ENCODE measurements at regions of chr1 and their contacts with region 1.

Region 1: GRCh38 chr1:67468066-67468718 is 38.0 kb upstream of the SERBP1 start:
- DNase-seq: peak; percentile 41
- H3K4me3 ChIP-seq: no peak overlapping the region
- H3K27ac ChIP-seq: no peak overlapping the region
- H3K4me1 ChIP-seq: peaks cover 7% of the 10 kb centered on the region
- H3K27me3 ChIP-seq: no peaks in the 10 kb centered on the region
- CTCF ChIP-seq: no peak

Region 2: DNA sequence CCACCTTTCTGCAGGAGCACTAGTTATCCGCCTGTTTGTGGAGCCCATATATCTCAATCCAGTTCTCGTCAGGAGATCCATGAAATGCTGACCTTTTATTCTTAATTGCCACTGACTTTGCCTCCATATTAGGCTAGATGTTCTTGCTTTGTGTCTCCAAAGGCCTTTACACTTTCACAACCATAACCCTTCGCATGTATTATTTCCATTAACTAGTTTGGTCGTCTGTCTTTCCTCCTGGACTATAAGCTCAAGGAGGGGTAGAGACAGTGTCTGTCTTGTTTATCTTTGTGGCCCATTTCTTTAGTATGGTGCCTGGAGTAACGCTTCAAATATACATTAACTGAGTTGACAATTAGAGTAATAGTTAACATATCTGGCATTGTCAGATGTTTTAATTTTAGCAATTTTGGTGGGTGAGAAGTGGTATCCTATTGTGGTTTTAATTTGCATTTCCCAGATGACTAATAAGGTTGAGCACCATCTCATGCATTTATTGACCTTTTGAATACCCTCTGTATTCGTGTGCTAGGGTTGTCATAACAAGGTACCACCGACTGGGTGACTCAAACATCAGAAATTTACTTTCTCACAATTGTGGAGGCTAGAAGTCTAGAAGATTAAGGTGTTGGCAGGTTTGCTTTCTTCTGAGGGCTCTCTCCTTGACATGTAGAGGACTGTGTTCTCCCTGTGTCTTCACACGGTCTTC is 182.3 kb before region 1 on chr1:
- CTCF ChIA-PET with region 1: interaction called, 12 read pairs
- dilution Hi-C with region 1: no loop called
- in situ Hi-C with region 1: no loop called
- intact Hi-C with region 1: no loop called
- DNase-seq: peak; percentile 58
- H3K4me3 ChIP-seq: no peak overlapping the region
- H3K27ac ChIP-seq: no peak overlapping the region
- H3K4me1 ChIP-seq: peaks cover 6% of the 10 kb centered on the region
- H3K27me3 ChIP-seq: no peaks in the 10 kb centered on the region
- CTCF ChIP-seq: no peak

Region 3: DNA sequence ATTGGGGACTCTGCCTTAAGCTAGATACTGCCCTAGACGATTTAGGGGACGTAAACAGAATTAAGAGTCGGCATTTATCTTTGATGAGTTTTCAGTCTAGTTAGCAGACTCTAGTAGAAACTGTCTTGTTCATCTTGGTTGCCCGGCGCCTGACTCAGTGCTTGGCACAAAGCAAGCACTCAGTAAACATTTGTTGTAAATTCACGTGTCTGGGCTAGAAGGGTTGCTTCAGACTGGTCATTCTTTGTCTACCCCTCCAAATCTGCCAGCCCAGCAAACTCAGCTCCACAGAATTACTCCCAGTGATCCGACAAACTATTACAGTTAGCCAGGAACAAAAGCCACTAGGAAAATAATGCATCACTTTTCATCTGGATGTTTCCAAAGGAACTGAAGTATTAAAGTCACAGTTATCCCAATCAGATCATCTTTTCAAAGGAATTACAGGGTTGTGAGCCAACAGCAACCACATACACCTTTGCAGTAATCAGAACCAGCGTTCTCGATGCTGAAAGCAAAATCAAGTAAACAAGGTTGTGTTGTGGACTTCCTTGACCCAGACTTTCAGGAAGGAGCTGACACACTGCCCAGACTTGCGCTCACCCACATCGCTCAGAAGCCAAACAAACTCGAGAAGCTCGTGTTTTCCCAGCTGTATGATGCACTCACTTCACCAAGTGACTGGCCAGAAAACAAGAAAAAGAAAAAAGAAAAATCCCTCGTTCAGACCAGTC is 150.3 kb after region 1 on chr1:
- CTCF ChIA-PET with region 1: no interaction called
- dilution Hi-C with region 1: no loop called
- in situ Hi-C with region 1: no loop called
- intact Hi-C with region 1: no loop called
- DNase-seq: peak; percentile 96
- H3K4me3 ChIP-seq: peak overlapping the region in 1 of 3 experiments; percentile 28
- H3K27ac ChIP-seq: peak overlapping the region; percentile 83
- H3K4me1 ChIP-seq: peaks cover 20% of the 10 kb centered on the region
- H3K27me3 ChIP-seq: no peaks in the 10 kb centered on the region
- CTCF ChIP-seq: no peak